Activated CD4-positive, alpha-beta T cell treated with anti-CD3 and anti-CD28 coated beads, Interleukin-2, amount 10 ng/mL, durations not matched to agents 24 days and 14 days (primary cell): ENCODE measurements at regions of chr12 and their contacts with region 1.

Region 1: DNA sequence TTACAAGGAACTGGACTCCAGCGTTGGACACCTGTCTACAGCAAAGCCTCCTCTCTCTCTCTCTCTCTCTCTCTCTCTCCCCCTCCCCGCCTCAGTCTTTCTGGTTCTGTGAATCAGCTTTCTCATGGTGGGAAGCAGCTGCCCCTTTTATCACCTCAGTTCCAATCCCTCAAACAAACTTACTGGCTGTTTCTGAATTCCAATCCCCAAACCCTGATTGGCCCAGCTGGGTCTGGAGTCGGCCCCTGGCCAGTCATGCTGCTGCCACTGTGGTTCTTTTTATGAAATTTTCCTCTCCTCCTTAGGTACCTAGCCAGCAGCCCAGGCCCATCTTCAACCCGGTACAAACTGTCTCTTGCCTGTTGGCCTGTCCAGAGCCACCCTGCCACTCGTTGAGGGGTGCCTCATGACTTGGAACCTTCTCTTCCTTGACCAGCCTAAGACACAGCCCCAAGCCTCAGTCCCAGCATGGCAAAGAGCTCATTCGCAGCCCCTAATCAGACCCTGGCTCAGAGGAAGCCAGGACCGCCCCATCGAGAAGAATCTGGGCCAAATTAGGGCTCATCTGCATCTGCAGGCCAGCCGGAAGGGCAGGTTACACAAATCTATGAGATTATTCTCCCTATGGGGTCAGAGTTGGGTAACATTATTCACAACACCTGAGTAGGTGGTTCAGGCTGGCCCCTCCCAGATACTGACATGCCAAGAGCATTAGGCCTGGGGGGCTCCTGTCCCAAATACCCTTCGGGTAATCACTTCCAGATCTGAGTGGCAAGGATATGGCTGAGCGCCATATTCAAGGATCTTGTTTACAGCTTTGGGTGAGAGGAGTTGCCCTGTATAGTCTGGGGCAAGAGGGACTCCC is 9.5 kb upstream of the MORN3 start:
- DNase-seq: no peak
- H3K4me3 Mint-ChIP-seq: no peak overlapping the region
- H3K27ac Mint-ChIP-seq: no peak overlapping the region
- H3K4me1 Mint-ChIP-seq: peaks cover 7% of the 10 kb centered on the region
- H3K27me3 Mint-ChIP-seq: no peaks in the 10 kb centered on the region

Region 2: DNA sequence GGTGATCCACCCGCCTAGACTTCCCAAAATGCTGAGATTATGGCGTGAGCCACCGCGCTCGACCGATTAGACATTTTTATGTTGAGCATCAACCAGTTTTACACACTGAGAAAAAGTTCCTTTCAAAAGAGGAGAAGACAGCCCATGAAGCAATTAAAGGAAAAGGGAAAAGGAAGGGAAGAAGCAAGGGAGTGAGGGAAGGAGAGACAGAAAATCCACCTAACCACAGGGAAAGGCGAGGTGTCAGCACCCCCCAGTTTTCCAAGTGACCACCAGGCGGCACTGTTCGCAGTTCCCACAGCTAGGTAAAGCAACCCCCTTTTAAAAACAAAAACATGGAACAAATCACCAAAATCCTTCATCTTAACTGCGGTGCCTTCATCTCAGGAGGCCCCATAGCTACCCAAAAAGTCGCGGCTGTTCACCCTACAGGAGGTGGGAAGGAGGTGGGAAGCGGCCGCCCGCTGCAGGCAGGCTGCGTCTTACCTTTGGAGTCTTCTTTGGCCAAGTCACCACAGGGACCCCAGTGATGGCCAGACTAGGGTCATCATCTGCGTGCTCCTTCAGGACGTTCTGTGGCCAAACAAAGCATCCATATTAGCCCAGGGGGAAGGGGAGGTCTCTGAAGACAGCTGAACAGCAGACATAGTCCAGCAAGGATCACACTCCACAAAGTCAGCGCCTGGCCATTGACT is 184.7 kb before region 1 on chr12:
- intact Hi-C with region 1: loop called (anchors 1 kb)
- DNase-seq: peak; percentile 86
- H3K4me3 Mint-ChIP-seq: no peak overlapping the region
- H3K27ac Mint-ChIP-seq: no peak overlapping the region
- H3K4me1 Mint-ChIP-seq: peaks cover 13% of the 10 kb centered on the region
- H3K27me3 Mint-ChIP-seq: no peaks in the 10 kb centered on the region

Region 3: DNA sequence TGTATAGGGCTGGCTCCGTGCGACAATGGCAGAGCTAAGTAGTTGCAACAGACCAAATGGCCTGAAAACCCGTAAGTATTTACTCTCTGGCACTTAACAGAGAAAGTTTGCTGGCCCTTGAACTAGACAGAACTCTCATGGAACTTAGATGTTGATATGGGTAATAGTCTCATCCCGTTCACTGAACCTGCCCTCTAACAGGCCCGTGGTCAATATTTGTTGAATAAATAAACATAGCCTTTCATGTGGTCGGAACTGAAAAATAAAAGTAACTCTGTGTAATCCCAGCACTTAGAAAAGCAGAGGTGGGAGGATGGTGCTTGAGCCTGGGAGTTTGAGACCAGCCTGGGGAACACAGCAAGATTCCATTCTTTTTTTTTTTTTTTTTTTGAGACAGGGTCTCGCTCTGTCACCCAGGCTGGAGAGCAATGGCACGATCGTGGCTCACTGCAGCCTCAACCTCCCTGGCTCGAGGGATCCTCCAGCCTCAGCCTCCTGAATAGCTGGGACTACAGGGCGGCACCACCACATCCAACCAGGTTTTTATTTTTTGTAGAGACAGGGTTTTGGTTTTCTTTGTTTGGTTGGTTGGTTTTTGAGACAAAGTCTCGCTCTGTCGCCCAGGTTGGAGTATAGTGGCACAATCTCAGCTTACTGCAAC is 127.8 kb before region 1 on chr12:
- intact Hi-C with region 1: loop called (anchors 2 kb)
- DNase-seq: no peak
- H3K4me3 Mint-ChIP-seq: no peak overlapping the region
- H3K27ac Mint-ChIP-seq: no peak overlapping the region
- H3K4me1 Mint-ChIP-seq: peaks cover 4% of the 10 kb centered on the region
- H3K27me3 Mint-ChIP-seq: no peaks in the 10 kb centered on the region